MCF 10A (cell line): ENCODE measurements at regions of chr1 and their contacts with region 1.

Region 1: GRCh38 chr1:169546087-169546995 is 39.9 kb downstream of the F5 start:
- DNase-seq: peak; percentile 88
- H3K4me3 Mint-ChIP-seq: no peak overlapping the region
- H3K27ac Mint-ChIP-seq: no peak overlapping the region
- H3K4me1 Mint-ChIP-seq: no peaks in the 10 kb centered on the region
- H3K27me3 Mint-ChIP-seq: peaks cover 8% of the 10 kb centered on the region
- CTCF ChIP-seq: peak; percentile 86

Region 2: GRCh38 chr1:169031566-169032201 is 514.7 kb before region 1 on chr1:
- CTCF ChIA-PET with region 1: no interaction called
- POLR2A ChIA-PET with region 1: no interaction called
- intact Hi-C with region 1: no loop called
- DNase-seq: no peak
- H3K4me3 Mint-ChIP-seq: no peak overlapping the region
- H3K27ac Mint-ChIP-seq: no peak overlapping the region
- H3K4me1 Mint-ChIP-seq: peaks cover 6% of the 10 kb centered on the region
- H3K27me3 Mint-ChIP-seq: no peaks in the 10 kb centered on the region
- CTCF ChIP-seq: no peak

Region 3: DNA sequence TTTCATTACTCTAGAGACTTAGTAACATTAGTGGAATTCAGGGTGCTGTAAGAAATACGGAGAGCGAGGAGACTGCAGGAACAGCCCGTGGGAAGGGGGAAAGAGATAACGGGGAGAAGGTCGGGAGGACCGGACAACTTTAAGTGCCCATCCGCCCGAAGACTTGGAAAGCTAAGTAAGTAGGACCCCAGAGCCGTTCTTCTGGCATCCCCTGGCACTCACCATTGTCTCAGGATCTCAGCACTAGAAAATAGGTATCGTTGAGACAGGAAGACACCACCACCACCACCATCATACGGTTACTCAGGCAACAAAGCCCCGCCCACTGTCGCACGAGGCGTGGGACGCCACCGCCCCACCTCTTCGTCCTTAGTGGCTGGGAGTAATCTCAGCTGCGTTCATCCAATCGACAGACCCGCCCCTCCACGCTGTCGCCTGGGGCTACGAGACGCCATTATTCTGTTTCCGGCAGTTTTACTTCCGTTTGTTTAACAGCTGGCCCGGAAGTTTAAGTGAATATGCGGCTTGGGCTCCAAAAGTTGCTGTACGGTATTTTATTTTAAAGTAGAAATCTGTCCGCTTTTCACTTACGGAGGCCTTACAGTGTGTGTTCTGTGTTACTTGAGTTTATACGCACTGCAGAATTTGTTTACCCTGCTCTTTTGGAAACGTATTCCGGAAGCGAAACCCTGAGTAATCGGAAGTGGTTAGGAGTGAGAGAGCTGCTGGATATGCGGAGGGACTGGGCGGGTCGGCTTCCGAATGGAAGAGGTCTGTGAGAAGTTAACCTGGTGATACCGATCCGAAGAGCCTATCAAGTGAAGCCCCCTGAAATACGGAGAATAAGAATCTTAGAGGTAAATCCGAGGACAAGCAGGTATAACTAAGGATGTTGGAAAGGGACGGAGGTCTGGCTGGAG is 178.6 kb before region 1 on chr1 and contains the starts of genes BLZF1 and NME7:
- CTCF ChIA-PET with region 1: interaction called, 9 read pairs
- POLR2A ChIA-PET with region 1: interaction called, 4 read pairs
- intact Hi-C with region 1: loop called (anchors 1 kb)
- DNase-seq: peak; percentile 99
- H3K4me3 Mint-ChIP-seq: no peak within 1 kb of the TSS
- H3K27ac Mint-ChIP-seq: no peak within 1 kb of the TSS
- H3K4me1 Mint-ChIP-seq: peaks cover 24% of the 10 kb centered on the region
- H3K27me3 Mint-ChIP-seq: no peaks in the 10 kb centered on the region
- CTCF ChIP-seq: no peak
- total RNA-seq, gene BLZF1: 57.8 and 66.1 TPM in 2 replicates
- total RNA-seq, gene NME7: 36.5 and 46.8 TPM in 2 replicates

Region 4: GRCh38 chr1:169479363-169480075 is 66.8 kb before region 1 on chr1:
- CTCF ChIA-PET with region 1: interaction called, 42 read pairs
- POLR2A ChIA-PET with region 1: interaction called, 17 read pairs
- intact Hi-C with region 1: no loop called
- DNase-seq: no peak
- H3K4me3 Mint-ChIP-seq: no peak overlapping the region
- H3K27ac Mint-ChIP-seq: peak overlapping the region; percentile 54
- H3K4me1 Mint-ChIP-seq: peaks cover 40% of the 10 kb centered on the region
- H3K27me3 Mint-ChIP-seq: no peaks in the 10 kb centered on the region
- CTCF ChIP-seq: no peak

Region 5: GRCh38 chr1:169529068-169529696 is 17.2 kb before region 1 on chr1:
- CTCF ChIA-PET with region 1: interaction called, 23 read pairs
- POLR2A ChIA-PET with region 1: interaction called, 6 read pairs
- intact Hi-C with region 1: no loop called
- DNase-seq: peak; percentile 61
- H3K4me3 Mint-ChIP-seq: peak overlapping the region; percentile 10
- H3K27ac Mint-ChIP-seq: peak overlapping the region; percentile 77
- H3K4me1 Mint-ChIP-seq: peaks cover 33% of the 10 kb centered on the region
- H3K27me3 Mint-ChIP-seq: no peaks in the 10 kb centered on the region
- CTCF ChIP-seq: no peak

Region 6: GRCh38 chr1:169648709-169649108 is 102.4 kb after region 1 on chr1:
- CTCF ChIA-PET with region 1: no interaction called
- POLR2A ChIA-PET with region 1: no interaction called
- intact Hi-C with region 1: no loop called
- DNase-seq: no peak
- H3K4me3 Mint-ChIP-seq: no peak overlapping the region
- H3K27ac Mint-ChIP-seq: no peak overlapping the region
- H3K4me1 Mint-ChIP-seq: no peaks in the 10 kb centered on the region
- H3K27me3 Mint-ChIP-seq: peaks cover 46% of the 10 kb centered on the region
- CTCF ChIP-seq: no peak

Region 7: GRCh38 chr1:169711469-169712281 is 165.3 kb after region 1 on chr1 and contains the start of gene SELL:
- CTCF ChIA-PET with region 1: interaction called, 153 read pairs
- POLR2A ChIA-PET with region 1: no interaction called
- intact Hi-C with region 1: loop called (anchors 1 kb)
- DNase-seq: peak; percentile 90
- H3K4me3 Mint-ChIP-seq: peak within 1 kb of the TSS; percentile 58
- H3K27ac Mint-ChIP-seq: no peak within 1 kb of the TSS
- H3K4me1 Mint-ChIP-seq: peaks cover 7% of the 10 kb centered on the region
- H3K27me3 Mint-ChIP-seq: peaks cover 27% of the 10 kb centered on the region
- CTCF ChIP-seq: peak; percentile 85
- total RNA-seq, gene SELL: not detected in 2 replicates